ENCODE measurements at regions of chr17 and their contacts with region 1.

Region 1: DNA sequence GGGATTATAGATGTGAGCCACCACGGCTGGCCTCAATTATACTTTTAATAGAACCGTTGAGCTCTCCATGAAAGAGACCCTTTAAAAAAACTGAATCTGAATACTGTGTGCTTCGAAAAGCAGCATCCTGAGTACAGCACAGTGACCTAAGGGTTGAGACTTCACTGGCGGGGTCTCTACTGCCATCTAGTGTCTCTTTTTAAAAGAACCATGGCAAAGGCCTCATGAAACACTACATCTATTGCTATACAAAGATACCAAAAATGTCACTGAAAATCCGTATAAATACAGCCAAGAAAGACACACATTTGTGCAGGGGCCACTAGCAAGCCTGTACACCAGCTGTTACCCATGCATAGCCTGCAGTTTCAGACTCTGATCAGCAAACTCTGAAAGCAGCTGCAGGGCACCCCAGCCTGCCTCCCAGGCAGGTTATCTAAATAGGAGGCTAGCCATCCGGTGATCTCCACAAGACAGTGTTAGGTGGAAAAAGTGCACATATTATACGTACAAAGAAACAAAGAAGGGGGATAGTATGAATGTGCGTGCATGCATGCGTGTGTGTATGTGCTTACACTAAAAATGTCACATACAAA is 35.3 kb downstream of the NPLOC4 start:
- DNase-seq: peak in 1 of 2 experiments; percentile 50
- H3K4me3 ChIP-seq: no peak overlapping the region
- H3K27ac ChIP-seq: no peak overlapping the region
- H3K4me1 ChIP-seq: no peaks in the 10 kb centered on the region
- H3K27me3 ChIP-seq: no peaks in the 10 kb centered on the region
- CTCF ChIP-seq: peak in 2 of 3 experiments; percentile 54 to 72; a peak in 3 of 4 replicates
- EP300 ChIP-seq: no peak
- POLR2A ChIP-seq: no peak
- RAD21 ChIP-seq: peak; percentile 51 to 57

Region 2: GRCh38 chr17:81566461-81567126 is 35.0 kb before region 1 on chr17:
- CTCF ChIA-PET with region 1: interaction called, 12 read pairs
- POLR2A ChIA-PET with region 1: no interaction called
- DNase-seq: no peak
- H3K4me3 ChIP-seq: no peak overlapping the region
- H3K27ac ChIP-seq: no peak overlapping the region
- H3K4me1 ChIP-seq: no peaks in the 10 kb centered on the region
- H3K27me3 ChIP-seq: no peaks in the 10 kb centered on the region
- CTCF ChIP-seq: no peak
- EP300 ChIP-seq: no peak
- POLR2A ChIP-seq: no peak
- RAD21 ChIP-seq: no peak

Region 3: GRCh38 chr17:81579821-81580321 is 21.8 kb before region 1 on chr17:
- CTCF ChIA-PET with region 1: interaction called, 31 read pairs
- POLR2A ChIA-PET with region 1: interaction called, 14 read pairs
- DNase-seq: no peak
- H3K4me3 ChIP-seq: no peak overlapping the region
- H3K27ac ChIP-seq: no peak overlapping the region
- H3K4me1 ChIP-seq: no peaks in the 10 kb centered on the region
- H3K27me3 ChIP-seq: no peaks in the 10 kb centered on the region
- CTCF ChIP-seq: no peak
- EP300 ChIP-seq: no peak
- POLR2A ChIP-seq: no peak
- RAD21 ChIP-seq: no peak

Measured in H1 (cell line).